Dorsolateral prefrontal cortex (tissue), 120 donors: ENCODE measurements at regions of chr2 and their contacts with region 1.

Region 1: DNA sequence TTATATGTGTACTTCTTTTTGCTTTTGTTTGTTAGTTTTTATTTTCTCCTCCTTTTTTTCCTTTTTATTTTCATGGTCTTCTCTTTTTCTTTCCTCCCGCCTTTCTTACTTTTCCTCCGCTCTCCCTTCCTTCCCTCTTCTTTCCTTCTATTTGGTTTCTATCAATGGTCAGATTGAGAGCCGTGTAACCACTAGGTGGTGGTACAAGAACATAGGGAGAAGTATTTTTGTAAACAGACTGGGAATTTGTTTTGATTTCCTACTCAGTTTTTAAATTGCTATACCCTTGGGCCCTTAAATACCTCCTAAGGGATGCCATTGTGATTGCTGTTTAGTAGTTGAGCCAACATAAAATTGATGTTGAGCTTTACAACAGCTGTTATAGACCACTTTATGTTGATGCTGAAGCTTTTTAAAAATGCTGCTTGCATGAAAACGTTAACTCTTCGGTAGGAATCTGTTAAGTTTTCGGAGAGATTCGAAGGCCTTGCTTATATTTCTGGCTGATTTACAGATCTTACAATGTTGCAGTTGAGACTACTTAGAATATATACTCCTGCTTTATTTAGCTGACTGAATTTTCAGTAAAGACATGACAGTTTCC is 124.2 kb downstream of the UBE2E3 start:
- DNase-seq: peak in 1 of 10 donors; percentile 5
- H3K4me3 ChIP-seq: no peak overlapping the region
- H3K27ac ChIP-seq: peak overlapping the region in 1 of 59 donors; percentile 25
- H3K27me3 ChIP-seq: no peaks in the 10 kb centered on the region
- CTCF ChIP-seq: peak; percentile 33 to 83 (median 66)

Region 2: DNA sequence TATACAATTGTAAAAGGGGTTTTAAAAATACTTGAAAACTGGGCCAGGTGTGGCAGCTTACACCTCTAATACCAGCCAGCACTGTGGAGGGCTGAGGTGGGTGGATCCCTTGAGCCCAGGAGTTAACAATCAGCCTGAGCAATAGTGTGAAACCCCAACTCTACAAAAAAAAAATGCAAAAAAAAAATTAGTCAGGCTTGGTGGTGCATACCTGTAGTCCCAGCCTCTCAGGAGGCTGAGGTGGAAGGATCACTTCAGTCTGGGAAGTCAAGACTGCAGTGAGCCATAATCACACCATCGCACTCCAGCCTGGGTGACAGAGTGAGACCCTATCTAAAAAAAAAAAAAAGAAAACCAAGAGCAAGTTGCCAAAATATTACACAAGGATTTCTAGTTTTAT is 58.5 kb after region 1 on chr2:
- intact Hi-C with region 1: no loop called
- DNase-seq: no peak
- H3K4me3 ChIP-seq: no peak overlapping the region
- H3K27ac ChIP-seq: no peak overlapping the region
- H3K27me3 ChIP-seq: no peaks in the 10 kb centered on the region
- CTCF ChIP-seq: no peak

Region 3: GRCh38 chr2:181457121-181457740 is 352.6 kb after region 1 on chr2 and contains the start of gene ITGA4:
- intact Hi-C with region 1: loop called (anchors 10 kb)
- DNase-seq: peak in 5 of 10 donors; percentile 19 to 52 (median 33)
- H3K4me3 ChIP-seq: peak within 1 kb of the TSS; percentile 35 to 75 (median 56)
- H3K27ac ChIP-seq: peak within 1 kb of the TSS in 5 of 59 donors; percentile 6 to 39 (median 13)
- H3K27me3 ChIP-seq: peaks cover 0 to 54% (median 21%) of the 10 kb centered on the region in 45 donors
- CTCF ChIP-seq: peak in 53 of 56 donors; percentile 13 to 68 (median 48)
- total RNA-seq, gene ITGA4: 0.50 to 11.7 (median 2.7) TPM

Region 4: DNA sequence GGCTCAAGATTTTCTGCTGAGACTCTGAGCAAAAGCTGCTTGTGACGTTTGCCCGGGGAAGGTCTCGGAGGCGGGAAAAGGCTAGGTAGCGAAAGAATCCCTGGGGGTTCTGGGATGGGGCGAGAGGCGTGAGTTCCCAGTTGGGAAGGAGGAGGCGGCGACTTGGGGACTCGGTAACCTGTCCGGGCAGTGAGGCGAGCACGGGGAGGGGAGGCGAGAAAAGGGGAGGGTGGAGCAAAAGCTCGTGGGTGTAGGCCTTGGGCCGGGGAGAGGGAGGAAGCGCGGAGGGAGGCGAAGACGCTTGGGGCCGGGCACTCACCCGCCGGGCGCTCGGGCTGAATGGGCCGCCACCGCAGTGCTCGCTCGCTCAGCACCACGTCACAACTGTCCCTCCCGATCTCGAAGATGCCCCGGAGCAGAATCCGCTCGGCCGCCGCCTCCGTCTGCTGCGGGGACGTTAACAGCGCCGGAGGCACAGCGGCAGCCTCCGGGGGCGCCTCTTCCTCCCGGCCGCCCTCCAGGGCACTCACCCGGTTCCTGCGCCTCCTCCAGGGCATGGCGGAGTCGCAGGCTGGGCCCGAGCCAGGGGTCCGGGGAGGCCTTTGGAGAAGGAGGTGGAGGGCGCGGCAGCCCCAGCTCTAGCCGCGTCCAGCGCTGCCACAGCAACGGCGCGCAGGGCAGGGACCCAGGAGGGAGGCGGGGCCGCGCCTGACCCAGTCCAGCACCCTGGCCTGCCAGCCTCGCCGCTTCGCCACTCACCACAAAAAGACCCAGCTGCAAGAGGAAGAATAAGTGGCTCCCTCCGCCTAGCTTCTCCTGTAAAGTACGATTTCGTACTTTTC is 552.1 kb after region 1 on chr2 and contains the start of gene CERKL:
- intact Hi-C with region 1: no loop called
- DNase-seq: peak in 5 of 10 donors; percentile 25 to 85 (median 45)
- H3K4me3 ChIP-seq: peak within 1 kb of the TSS; percentile 29 to 75 (median 58)
- H3K27ac ChIP-seq: peak within 1 kb of the TSS in 2 of 59 donors; percentile 35 to 89
- H3K27me3 ChIP-seq: peaks cover 0 to 62% (median 12%) of the 10 kb centered on the region in 45 donors
- CTCF ChIP-seq: no peak
- total RNA-seq, gene CERKL: 0.40 to 6.9 (median 2.1) TPM